Activated CD8-positive, alpha-beta T cell treated with anti-CD3 and anti-CD28 coated beads for 36 hours (primary cell): ENCODE measurements at regions of chr10 and their contacts with region 1.

Region 1: DNA sequence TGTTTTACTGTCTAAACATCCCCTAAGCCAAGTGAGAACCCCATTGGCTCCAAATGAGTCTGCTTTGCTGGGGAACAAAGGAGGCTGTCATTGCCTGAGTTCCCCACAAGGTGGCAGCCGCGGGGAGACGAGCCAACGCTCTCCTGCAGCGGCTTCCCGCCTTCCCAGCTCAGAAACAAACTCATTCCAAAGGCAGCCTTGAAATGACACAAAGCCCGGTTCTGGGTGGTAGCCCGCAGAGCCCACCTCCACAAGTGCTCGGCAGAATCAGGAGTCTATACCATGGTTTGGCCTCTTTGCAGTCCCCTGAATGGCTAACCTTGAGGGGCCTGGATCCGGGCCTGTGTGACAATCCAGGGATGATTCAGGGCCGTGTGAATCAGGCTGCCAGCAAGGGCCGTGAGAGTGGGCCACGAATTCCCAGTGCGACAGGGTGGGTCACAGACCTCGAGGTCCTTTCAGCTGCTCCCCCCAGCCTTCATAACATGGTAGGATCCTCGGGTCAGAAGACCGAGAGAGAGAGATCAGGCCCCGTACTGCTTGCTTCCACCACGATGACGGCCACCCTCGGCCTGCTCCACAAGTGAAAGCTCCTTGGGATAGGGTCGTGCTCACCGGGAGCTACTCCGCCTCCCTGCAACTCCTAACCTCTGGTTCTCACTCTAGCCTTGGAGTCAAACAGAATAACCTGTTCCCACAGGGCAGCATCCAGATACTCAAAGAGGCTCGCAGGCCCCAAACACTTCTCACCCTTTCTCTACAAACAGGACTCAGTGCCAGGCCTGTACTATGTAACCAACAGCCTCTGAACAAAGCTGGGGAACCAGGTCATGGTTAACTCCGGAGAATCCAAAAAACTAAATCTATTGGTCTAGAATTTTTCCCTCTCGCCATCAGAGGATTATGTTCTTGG is 79.6 kb downstream of the DLG5 start:
- DNase-seq: peak; percentile 71
- ATAC-seq: peak; percentile 93
- H3K4me3 Mint-ChIP-seq: no peak overlapping the region
- H3K27ac Mint-ChIP-seq: no peak overlapping the region
- H3K4me1 Mint-ChIP-seq: no peaks in the 10 kb centered on the region
- H3K27me3 Mint-ChIP-seq: no peaks in the 10 kb centered on the region
- CTCF ChIP-seq: peak; percentile 94

Region 2: DNA sequence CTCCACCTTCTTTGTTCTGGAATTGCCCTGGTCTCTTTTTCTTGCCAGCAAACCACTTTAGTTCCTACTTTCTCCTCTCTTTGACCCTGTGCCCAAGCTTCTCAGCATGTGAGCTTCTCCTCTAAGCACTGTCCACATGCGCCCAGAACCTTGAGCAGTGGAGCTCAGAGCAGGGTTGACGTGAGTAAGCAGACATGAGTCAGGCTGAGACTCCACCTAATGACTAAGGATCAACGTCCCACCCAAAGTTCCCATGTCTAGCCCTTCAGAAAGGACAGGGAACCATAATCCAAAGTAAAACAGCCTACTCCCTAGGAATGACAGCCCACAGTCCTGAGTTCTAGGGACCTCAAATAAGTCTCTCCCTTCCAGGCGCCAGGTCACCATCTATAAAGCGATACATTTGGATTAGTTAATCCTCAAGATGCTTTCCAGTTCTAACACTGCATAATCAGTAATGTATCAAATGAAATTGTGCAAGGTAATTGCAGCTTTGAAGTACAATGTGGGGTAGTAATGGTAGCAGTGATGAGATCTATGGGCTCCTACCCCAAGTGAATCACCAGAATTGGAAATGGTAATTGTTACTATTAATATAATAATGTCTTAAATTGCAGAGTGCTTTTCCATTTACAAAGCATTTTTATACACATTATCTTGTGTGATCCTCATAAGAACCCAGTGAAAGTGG is 253.9 kb before region 1 on chr10:
- CTCF ChIA-PET with region 1: no interaction called
- POLR2A ChIA-PET with region 1: no interaction called
- intact Hi-C with region 1: no loop called
- DNase-seq: no peak
- ATAC-seq: no peak
- H3K4me3 Mint-ChIP-seq: no peak overlapping the region
- H3K27ac Mint-ChIP-seq: no peak overlapping the region
- H3K4me1 Mint-ChIP-seq: no peaks in the 10 kb centered on the region
- H3K27me3 Mint-ChIP-seq: no peaks in the 10 kb centered on the region
- CTCF ChIP-seq: no peak

Region 3: DNA sequence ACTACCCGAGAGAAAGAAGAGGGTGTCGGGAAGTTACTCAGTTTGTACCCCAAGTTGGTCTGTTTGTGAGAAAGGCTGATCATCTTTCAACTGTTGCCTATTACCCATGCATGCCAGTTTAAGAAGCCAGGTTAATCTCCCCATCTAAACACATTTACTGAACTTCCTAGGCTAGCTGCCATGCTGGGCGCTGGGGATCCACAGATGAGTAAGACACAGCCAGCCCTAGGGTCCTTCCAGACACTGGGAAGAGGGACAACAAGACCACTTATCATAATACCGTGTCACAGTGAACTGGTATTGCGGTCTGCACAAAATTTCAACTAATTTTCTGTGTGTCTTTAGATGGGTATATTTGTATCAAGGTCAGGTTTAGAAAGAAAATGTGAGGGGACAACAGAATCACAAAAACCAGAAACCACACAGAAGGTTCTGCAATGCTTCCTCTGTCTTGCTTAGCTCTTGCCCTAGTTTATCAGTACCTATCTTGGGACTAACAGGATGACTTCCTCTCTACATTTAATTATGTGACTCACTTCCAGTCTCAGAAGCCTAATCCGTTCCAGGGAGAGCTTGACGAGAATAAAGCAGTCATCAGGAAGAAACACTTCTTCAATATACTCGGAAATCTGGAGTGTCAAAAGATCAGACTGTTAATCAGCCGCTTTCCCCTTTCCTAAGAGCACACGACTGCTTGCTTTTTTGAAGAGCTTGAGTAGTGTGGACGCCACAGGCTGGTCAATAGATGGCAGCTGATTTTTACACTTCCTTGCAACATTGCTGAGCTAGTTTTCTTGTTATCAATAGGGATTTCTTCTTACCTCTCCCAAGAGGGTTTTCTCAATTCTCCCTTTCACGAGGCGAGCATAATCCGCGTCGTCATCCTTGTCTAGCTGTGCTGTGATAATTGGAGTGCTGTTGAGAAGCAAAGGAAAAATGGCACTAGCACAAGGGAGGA is 136.7 kb after region 1 on chr10:
- CTCF ChIA-PET with region 1: no interaction called
- POLR2A ChIA-PET with region 1: no interaction called
- intact Hi-C with region 1: loop called (anchors 10 kb)
- DNase-seq: no peak
- ATAC-seq: no peak
- H3K4me3 Mint-ChIP-seq: no peak overlapping the region
- H3K27ac Mint-ChIP-seq: no peak overlapping the region
- H3K4me1 Mint-ChIP-seq: no peaks in the 10 kb centered on the region
- H3K27me3 Mint-ChIP-seq: no peaks in the 10 kb centered on the region
- CTCF ChIP-seq: no peak